ENCODE measurements at regions of chr5 and their contacts with region 1.

Region 1: DNA sequence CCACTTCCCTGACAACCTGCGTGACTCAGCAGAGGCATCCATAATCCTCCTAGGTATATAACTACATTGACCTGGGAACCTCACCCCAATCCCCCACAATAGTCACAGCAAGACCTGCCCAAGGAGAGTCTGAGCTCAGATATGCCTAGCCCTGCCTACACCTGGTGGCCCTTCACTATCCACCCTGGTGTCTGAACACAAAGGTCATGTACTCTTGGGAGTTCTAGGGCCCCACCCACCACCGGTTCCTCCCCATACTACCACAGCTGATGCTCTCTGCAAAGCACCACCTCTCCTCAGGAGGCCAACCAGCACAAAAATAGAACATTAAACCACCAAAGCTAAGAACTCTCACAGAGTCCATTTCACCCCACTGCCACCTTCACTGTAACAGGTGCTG is 34.8 kb upstream of the CARTPT start:
- DNase-seq: no peak
- H3K4me3 ChIP-seq: no peak overlapping the region
- H3K27me3 ChIP-seq: no peaks in the 10 kb centered on the region
- CTCF ChIP-seq: no peak

Region 2: GRCh38 chr5:71663570-71663969 is 20.7 kb before region 1 on chr5:
- CTCF ChIA-PET with region 1: no interaction called
- POLR2A ChIA-PET with region 1: no interaction called
- DNase-seq: no peak
- H3K4me3 ChIP-seq: no peak overlapping the region
- H3K27me3 ChIP-seq: no peaks in the 10 kb centered on the region
- CTCF ChIP-seq: no peak

Region 3: DNA sequence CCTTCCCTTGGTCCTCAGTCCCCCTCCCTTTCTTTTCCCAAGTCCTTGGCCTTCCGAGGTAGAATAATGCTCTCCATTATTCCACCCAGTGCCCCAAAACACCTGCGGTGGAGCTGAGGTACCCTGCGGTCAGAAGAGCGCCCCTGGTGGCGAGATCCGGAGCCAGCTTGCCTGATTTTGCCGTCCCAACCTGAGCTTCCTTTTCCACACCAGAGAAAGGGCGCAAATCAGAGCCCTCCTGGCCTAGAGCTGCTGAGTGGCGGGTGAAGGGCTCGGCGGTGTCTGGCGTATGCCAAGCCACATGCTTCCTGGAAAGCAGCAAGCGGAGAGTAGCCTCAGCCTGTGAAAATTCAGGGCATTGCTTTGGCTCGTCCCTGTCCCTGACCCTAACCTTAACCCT is 13.7 kb after region 1 on chr5:
- CTCF ChIA-PET with region 1: interaction called, 10 read pairs
- POLR2A ChIA-PET with region 1: no interaction called
- DNase-seq: no peak
- H3K4me3 ChIP-seq: no peak overlapping the region
- H3K27me3 ChIP-seq: peaks cover 8% of the 10 kb centered on the region
- CTCF ChIP-seq: peak; percentile 56

Region 4: DNA sequence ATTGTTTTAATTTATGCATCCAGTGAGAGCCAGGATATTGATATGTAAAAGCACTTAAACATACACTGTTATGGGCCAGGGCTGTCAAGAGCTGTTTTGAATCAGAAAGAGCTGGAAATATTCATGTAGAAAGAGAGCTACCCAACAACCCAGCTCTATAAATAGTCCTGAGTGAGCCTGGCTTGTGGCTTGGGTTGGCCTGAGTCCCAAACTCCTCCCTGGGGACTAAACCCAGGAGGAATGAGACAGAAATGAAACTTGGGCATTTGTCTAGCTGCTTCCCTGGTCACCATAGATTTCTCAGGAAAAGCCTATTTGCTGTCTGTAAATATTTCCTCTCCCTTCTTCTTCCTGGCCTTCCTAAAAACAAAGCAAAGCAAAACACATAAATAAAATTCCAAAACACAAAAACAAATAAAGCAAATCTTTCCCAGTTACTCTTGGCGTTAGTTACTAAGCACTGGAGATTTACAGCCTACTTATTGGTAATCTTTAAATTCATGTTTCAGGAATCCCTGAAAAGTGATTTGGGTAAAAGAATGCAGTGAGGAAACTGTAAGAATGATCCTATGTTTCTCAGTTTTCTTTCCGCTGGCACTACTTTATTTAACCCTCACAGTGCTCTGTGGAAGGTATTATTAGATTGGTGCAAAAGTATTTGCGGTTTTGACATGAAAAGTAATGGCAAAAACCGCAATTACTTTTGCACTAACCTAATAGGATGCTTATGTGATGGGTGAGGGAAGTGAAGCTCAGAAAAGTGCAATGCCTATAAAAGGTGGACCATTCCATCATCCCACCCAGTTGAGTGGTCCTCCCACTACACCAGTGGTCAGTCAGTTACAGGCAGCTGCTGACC is 146.6 kb after region 1 on chr5:
- CTCF ChIA-PET with region 1: no interaction called
- POLR2A ChIA-PET with region 1: no interaction called
- DNase-seq: peak; percentile 48
- H3K4me3 ChIP-seq: no peak overlapping the region
- H3K27me3 ChIP-seq: no peaks in the 10 kb centered on the region
- CTCF ChIP-seq: no peak